Left ventricle myocardium inferior (tissue), 1 donor: ENCODE measurements at regions of chr22 and their contacts with region 1.

Region 1: GRCh38 chr22:40679964-40680818 is 907 bp downstream of the MCHR1 start:
- DNase-seq: no peak
- H3K4me3 ChIP-seq: peak overlapping the region; percentile 53
- H3K27ac ChIP-seq: no peak overlapping the region
- H3K4me1 ChIP-seq: peaks cover 32% of the 10 kb centered on the region
- H3K27me3 ChIP-seq: peaks cover 15% of the 10 kb centered on the region
- CTCF ChIP-seq: no peak

Region 2: GRCh38 chr22:40636380-40637182 is 43.6 kb before region 1 on chr22 and contains the start of gene MRTFA:
- intact Hi-C with region 1: no loop called
- DNase-seq: peak; percentile 100
- H3K4me3 ChIP-seq: peak within 1 kb of the TSS; percentile 96
- H3K27ac ChIP-seq: peak within 1 kb of the TSS; percentile 93
- H3K4me1 ChIP-seq: peaks cover 61% of the 10 kb centered on the region
- H3K27me3 ChIP-seq: no peaks in the 10 kb centered on the region
- CTCF ChIP-seq: no peak
- total RNA-seq, gene MRTFA: 19.2 TPM

Region 3: DNA sequence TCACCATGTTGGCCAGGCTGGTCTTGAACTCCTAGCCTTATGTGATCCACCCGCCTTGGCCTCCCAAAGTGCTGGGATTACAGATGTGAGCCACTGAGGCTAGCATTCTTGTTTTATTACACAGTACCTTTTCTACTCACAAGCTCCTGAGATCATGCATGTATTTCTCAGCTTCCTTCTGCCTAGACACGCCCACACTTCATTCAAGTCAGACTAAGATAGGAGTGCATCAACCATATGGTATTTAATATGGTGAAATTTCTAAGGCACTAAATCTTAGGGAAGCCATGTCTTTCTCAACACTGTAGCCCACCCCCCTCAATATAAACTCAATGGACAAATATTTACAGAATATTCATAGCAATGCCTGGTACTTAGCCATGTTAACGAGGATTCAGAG is 76.9 kb after region 1 on chr22:
- intact Hi-C with region 1: loop called (anchors 5 kb)
- DNase-seq: no peak
- H3K4me3 ChIP-seq: no peak overlapping the region
- H3K27ac ChIP-seq: no peak overlapping the region
- H3K4me1 ChIP-seq: no peaks in the 10 kb centered on the region
- H3K27me3 ChIP-seq: no peaks in the 10 kb centered on the region
- CTCF ChIP-seq: no peak